ENCODE measurements at regions of chr17 and their contacts with region 1.

Region 1: GRCh38 chr17:65122836-65123756 is 14.1 kb upstream of the RGS9 start:
- DNase-seq: peak; percentile 85
- H3K4me3 Mint-ChIP-seq: peak overlapping the region; percentile 82
- H3K27ac Mint-ChIP-seq: peak overlapping the region; percentile 95
- H3K4me1 Mint-ChIP-seq: peaks cover 35% of the 10 kb centered on the region
- H3K27me3 Mint-ChIP-seq: peaks cover 5% of the 10 kb centered on the region

Region 2: GRCh38 chr17:64975329-64976087 is 147.6 kb before region 1 on chr17:
- intact Hi-C with region 1: loop called (anchors 2 kb)
- DNase-seq: peak; percentile 98
- H3K4me3 Mint-ChIP-seq: peak overlapping the region; percentile 81
- H3K27ac Mint-ChIP-seq: peak overlapping the region; percentile 97
- H3K4me1 Mint-ChIP-seq: peaks cover 56% of the 10 kb centered on the region
- H3K27me3 Mint-ChIP-seq: no peaks in the 10 kb centered on the region

Region 3: DNA sequence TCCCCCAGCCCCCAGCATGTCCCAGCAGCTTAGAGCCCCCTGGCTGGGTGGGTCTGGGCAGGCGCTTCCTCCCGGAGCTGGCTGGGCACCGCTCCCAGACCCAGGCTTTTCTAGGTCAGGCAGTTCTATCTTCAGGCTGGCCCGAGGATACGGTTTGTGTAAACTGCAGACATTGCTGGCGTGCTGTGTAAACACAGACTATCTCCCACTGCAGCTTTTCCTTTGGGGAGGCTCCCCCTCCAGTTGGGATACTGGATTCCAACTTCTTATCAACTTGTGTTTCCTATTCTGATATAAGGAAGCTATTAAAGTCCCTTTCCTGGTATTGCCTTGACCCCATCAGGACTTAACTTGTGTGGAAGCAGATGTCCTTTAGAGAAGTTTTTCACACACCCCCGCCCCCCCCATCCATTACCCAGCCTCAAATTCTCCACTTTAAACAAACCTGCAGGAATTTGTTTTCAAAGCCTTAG is 48.3 kb before region 1 on chr17:
- intact Hi-C with region 1: no loop called
- DNase-seq: no peak
- H3K4me3 Mint-ChIP-seq: no peak overlapping the region
- H3K27ac Mint-ChIP-seq: no peak overlapping the region
- H3K4me1 Mint-ChIP-seq: peaks cover 3% of the 10 kb centered on the region
- H3K27me3 Mint-ChIP-seq: peaks cover 5% of the 10 kb centered on the region

Region 4: DNA sequence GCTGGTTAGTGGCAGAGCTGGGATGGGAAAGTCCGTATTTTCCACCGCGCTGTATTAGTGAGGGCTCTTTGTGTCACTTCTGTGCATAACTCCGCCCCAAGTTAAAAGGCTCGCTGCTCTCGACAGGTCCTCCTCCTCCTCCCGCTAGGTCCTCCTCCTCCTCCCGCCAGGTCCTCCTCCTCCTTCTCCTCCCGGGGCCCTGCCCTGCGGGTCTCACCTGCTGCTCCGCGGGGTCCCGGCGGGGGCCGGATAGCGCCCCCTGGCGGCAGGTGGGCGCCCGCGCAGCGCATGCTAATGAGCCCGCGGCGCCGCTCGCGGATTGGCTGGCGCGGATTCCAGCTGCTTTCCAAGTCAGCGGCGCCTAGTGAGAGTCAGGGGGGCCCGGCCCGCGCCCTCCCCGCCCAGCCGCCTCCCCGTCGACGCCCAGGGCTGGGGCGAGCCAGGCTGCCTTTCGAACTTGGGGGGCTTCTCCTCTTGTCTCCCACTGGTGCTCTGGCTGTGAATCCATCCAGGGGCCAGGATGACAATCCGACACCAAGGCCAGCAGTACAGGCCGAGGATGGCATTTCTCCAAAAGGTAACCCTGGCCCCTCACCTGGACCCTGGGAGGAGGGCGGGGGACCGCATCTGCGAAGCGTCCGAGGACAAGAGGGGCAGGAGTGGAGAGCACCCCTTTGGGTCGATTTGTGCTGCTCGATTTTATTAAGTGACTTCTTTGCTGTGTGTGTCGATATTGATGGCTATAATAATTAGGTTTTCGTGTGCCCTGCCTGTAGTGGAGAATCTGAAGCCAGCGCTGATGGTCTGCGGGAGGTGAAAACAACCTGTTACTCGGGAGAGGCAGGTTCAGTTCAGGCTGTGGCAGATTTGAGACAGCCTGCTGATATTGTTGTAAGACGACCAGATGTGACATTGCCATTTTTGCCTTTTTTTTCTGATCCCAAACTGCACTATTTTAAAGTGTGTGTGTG is 14.2 kb after region 1 on chr17 and contains the start of gene RGS9:
- intact Hi-C with region 1: loop called (anchors 1 kb)
- DNase-seq: peak; percentile 87
- H3K4me3 Mint-ChIP-seq: peak within 1 kb of the TSS; percentile 92
- H3K27ac Mint-ChIP-seq: peak within 1 kb of the TSS; percentile 89
- H3K4me1 Mint-ChIP-seq: peaks cover 43% of the 10 kb centered on the region
- H3K27me3 Mint-ChIP-seq: no peaks in the 10 kb centered on the region
- total RNA-seq, gene RGS9: 16.1 and 16.3 TPM in 2 replicates

Region 5: GRCh38 chr17:65278050-65278819 is 155.1 kb after region 1 on chr17:
- intact Hi-C with region 1: no loop called
- DNase-seq: no peak
- H3K4me3 Mint-ChIP-seq: no peak overlapping the region
- H3K27ac Mint-ChIP-seq: no peak overlapping the region
- H3K4me1 Mint-ChIP-seq: peaks cover 15% of the 10 kb centered on the region
- H3K27me3 Mint-ChIP-seq: peaks cover 10% of the 10 kb centered on the region